SK-N-SH (cell line): ENCODE measurements at regions of chr11 and their contacts with region 1.

Region 1: DNA sequence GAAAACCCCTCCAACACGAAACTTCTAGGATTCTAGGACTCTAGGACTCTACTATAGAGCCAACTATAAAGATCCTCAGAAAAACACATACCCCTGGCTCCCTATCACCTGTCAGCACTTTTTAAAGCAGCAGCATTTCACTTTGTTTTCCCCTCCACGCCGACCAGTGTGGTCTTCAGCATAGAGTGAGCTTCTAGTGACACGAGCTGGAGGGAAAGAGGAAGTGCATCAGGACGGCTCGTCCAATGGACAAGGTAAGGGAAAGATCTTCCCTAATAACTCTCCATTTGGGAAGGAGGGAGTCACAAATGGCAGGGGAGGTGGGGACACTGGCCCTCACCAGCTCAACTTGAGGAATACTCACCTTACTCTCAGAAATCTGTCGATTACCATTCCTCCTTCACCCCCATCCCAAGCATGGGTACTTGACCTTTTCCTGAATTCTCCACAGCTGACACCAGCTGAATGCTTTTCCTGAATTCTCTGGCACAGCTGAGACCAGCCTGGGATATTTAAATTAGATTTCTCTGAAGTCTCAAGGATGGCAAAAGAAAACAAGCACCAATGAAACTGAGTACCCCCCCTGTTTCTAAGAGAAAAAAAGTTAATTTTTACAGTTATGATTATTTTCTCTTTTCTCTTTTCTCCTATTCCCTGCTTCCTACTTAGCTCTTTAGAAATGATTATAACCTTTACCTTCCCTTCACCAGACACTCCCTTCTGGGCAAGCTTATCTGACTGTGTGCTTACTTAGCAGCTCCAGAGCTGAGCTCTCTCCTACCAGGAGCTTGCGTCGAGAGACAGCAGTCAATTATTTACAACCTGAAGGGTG is 33.3 kb upstream of the NNMT start:
- DNase-seq: peak; percentile 75
- H3K4me3 ChIP-seq: peak overlapping the region in 1 of 2 experiments; percentile 27; a peak in 1 of 4 replicates
- H3K27ac ChIP-seq: no peak overlapping the region
- H3K4me1 ChIP-seq: no peaks in the 10 kb centered on the region; a peak in 1 of 4 replicates
- H3K27me3 ChIP-seq: peaks cover 14% of the 10 kb centered on the region; the same call in 1 of the 2 replicates
- CTCF ChIP-seq: peak; percentile 73
- EP300 ChIP-seq: no peak
- RAD21 ChIP-seq: peak; percentile 95

Region 2: DNA sequence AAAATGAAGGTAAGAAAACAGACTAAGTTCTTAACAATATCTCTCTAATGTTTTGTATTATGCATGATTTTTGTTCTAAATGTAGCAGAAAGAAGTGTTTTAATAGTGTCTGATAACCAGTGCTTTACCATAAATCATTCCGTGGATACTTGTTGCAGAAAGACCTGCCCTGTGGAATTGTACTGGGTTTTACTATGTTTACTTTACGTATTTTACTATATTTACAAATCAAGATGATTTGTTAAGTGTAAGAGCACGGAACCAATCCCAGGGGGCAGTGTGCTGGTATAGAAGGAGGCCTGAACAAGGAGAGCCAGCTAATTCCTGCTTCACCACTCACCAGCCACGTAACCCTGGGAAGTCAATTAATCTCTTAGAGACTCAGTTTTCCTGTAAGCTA is 356.9 kb before region 1 on chr11:
- CTCF ChIA-PET with region 1: interaction called, 376 read pairs
- POLR2A ChIA-PET with region 1: no interaction called
- DNase-seq: no peak
- H3K4me3 ChIP-seq: no peak overlapping the region
- H3K27ac ChIP-seq: no peak overlapping the region
- H3K4me1 ChIP-seq: no peaks in the 10 kb centered on the region; a peak in 2 of 4 replicates
- H3K27me3 ChIP-seq: no peaks in the 10 kb centered on the region; the same call in 1 of the 2 replicates
- CTCF ChIP-seq: peak; percentile 27
- EP300 ChIP-seq: no peak
- RAD21 ChIP-seq: no peak

Region 3: DNA sequence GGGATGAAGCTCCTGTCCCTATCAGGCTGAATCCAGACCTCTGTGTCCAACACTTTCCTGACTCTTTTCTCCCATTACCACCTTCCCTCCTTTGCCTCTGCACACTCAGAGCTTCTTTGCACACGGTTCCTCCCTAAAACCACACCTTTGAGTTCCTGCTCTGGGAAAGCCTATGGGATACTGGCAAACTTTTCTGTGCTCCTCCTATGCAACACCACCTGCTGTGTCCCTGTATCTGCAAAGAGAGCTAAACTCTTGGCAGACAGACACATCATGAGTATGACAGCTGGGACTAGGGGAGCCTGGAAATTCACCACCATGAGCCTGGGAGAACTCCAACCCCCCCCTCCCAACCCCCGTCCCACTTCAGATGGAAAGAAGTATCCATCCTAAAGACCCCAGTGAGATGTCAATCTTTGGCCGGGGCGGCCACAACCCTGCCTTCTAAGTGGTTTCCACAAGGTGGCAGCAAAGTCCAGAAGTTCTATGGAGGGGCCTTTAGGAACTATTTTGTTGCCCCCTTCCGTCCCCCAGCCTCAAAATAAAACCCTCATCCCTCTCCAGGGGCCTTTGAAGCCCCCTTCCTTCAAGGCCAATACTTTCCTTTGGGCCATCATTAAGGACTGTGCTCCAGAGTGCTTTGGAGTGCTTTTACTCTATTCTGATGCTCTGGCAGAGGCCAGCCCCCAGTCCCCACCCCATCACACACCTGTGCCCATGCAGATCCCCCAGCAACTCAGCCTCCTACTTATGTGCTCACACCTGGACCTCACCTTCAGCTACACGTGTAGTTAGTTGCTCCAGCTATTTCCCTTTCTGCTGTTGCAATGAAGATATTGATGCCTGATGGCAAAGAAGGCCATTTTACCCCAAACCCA is 268.6 kb before region 1 on chr11:
- CTCF ChIA-PET with region 1: interaction called, 329 read pairs
- POLR2A ChIA-PET with region 1: interaction called, 3 read pairs
- DNase-seq: peak; percentile 71
- H3K4me3 ChIP-seq: no peak overlapping the region
- H3K27ac ChIP-seq: no peak overlapping the region
- H3K4me1 ChIP-seq: peaks cover 0 to 16% of the 10 kb centered on the region in 2 experiments; a peak in 1 of 4 replicates
- H3K27me3 ChIP-seq: no peaks in the 10 kb centered on the region
- CTCF ChIP-seq: peak; percentile 79
- EP300 ChIP-seq: no peak
- RAD21 ChIP-seq: peak; percentile 74

Region 4: DNA sequence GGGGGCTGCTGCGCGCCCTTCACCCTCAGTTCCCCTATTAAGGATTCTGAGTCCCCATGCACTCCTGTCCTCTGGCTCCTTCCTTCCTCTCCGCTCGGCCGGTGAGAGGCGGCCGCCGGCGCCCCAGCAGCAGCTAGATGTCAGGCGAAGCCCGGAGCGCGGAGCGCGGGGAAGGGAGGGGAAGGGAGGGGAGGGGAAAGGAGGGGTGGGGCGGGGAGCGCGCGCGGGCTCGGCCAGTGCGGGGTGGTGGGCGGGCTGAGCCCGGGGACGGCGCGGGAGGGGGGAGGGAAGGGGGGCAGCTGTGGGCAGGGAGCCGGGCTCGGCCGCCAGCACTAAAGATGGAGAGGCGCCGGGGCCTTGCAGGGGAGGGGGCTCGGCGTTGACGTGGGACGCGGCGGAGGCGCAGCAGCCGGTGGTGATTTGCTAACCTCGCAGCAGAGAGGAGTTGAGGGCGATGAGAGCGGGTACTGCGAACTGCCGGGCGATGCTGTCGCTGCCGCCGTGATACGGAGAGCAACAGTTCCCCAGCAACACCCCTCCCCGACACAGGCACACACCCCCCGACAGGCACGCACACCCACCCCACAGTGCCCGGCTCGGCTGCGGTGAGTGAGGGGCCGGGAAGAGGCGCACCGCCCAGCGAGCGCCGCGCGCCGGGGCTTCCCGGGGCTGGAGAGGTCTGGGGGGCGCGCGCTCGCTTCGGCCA is 203.5 kb before region 1 on chr11 and contains the start of gene ZBTB16:
- CTCF ChIA-PET with region 1: interaction called, 112 read pairs
- POLR2A ChIA-PET with region 1: no interaction called
- DNase-seq: peak; percentile 74
- H3K4me3 ChIP-seq: peak within 1 kb of the TSS; percentile 44 to 62
- H3K27ac ChIP-seq: no peak within 1 kb of the TSS
- H3K4me1 ChIP-seq: peaks cover 0 to 11% of the 10 kb centered on the region in 2 experiments; a peak in 2 of 4 replicates
- H3K27me3 ChIP-seq: peaks cover 66% of the 10 kb centered on the region
- CTCF ChIP-seq: no peak
- EP300 ChIP-seq: no peak
- RAD21 ChIP-seq: no peak
- polyA plus RNA-seq, gene ZBTB16: not detected in 2 replicates

Region 5: GRCh38 chr11:114166897-114167323 is 96.0 kb before region 1 on chr11:
- CTCF ChIA-PET with region 1: interaction called, 47 read pairs
- POLR2A ChIA-PET with region 1: no interaction called
- DNase-seq: no peak
- H3K4me3 ChIP-seq: no peak overlapping the region
- H3K27ac ChIP-seq: no peak overlapping the region
- H3K4me1 ChIP-seq: peaks cover 24 to 30% of the 10 kb centered on the region in 2 experiments
- H3K27me3 ChIP-seq: peaks cover 62% of the 10 kb centered on the region
- CTCF ChIP-seq: no peak
- EP300 ChIP-seq: peak in 1 of 2 experiments; percentile 27; a peak in 1 of 4 replicates
- RAD21 ChIP-seq: no peak

Region 6: DNA sequence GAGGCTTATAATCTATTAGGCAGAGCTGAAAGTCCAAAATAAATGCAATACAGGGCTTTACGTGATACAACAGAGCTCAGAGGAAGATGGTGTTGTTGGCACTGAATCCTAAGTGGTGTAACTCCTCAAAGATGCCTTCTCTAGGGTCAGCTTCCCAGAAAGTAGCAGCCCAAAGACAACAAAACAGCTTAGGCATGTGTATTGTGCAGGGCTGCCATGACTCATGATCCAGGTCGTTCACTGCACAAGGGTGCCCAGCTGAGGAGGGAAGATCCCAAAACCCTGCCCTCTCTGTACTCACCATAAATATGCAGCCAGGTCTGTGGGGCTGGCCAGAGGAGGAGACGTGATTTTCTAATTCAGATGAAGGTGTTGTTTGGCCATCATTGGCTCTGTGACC is 26.1 kb before region 1 on chr11:
- CTCF ChIA-PET with region 1: interaction called, 40 read pairs
- POLR2A ChIA-PET with region 1: no interaction called
- DNase-seq: no peak
- H3K4me3 ChIP-seq: no peak overlapping the region
- H3K27ac ChIP-seq: no peak overlapping the region
- H3K4me1 ChIP-seq: peaks cover 0 to 14% of the 10 kb centered on the region in 2 experiments; a peak in 1 of 4 replicates
- H3K27me3 ChIP-seq: peaks cover 41% of the 10 kb centered on the region; the same call in 1 of the 2 replicates
- CTCF ChIP-seq: no peak
- EP300 ChIP-seq: no peak
- RAD21 ChIP-seq: no peak

Region 7: DNA sequence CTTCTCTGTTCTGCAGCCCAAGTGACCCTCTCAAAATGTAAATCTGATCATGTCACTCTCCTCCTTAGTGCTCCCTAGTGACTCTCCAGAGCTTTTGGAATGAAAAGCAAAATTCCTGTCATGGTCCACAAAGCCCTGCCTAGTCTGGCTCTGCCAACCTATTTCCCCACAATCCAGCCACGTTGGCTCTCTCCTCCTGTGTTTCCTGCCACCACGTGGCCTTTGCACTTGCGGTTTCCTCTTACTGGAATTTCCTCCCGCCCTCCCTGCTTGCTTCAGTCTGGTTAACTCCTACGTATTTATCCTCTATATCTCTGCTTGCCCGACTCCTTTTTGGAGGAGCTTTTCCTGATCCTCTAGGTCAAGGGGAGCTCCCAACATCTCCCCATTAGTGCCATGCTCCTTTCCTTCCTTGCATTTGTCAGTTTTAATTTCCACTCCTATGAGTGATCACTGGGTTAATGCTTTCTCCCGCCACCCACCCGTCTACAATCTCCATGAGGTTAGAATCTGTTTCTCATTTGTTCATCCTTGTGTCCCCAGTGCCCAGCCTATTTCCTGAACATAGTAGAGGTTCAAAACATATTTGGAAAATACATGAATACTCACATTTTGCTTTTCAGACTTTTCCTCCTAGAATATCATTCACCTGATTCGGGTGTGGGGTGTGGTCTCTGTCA is 44.8 kb after region 1 on chr11:
- CTCF ChIA-PET with region 1: interaction called, 12 read pairs
- POLR2A ChIA-PET with region 1: no interaction called
- DNase-seq: no peak
- H3K4me3 ChIP-seq: peak overlapping the region in 1 of 2 experiments; percentile 15; a peak in 1 of 4 replicates
- H3K27ac ChIP-seq: peak overlapping the region; percentile 59 to 86; a peak in 3 of 4 replicates
- H3K4me1 ChIP-seq: peaks cover 0 to 11% of the 10 kb centered on the region in 2 experiments; a peak in 1 of 4 replicates
- H3K27me3 ChIP-seq: no peaks in the 10 kb centered on the region
- CTCF ChIP-seq: no peak
- EP300 ChIP-seq: no peak; a peak in 1 of 4 replicates
- RAD21 ChIP-seq: no peak